Stomach (tissue), 19 donors: ENCODE measurements at regions of chr12 and their contacts with region 1.

Region 1: DNA sequence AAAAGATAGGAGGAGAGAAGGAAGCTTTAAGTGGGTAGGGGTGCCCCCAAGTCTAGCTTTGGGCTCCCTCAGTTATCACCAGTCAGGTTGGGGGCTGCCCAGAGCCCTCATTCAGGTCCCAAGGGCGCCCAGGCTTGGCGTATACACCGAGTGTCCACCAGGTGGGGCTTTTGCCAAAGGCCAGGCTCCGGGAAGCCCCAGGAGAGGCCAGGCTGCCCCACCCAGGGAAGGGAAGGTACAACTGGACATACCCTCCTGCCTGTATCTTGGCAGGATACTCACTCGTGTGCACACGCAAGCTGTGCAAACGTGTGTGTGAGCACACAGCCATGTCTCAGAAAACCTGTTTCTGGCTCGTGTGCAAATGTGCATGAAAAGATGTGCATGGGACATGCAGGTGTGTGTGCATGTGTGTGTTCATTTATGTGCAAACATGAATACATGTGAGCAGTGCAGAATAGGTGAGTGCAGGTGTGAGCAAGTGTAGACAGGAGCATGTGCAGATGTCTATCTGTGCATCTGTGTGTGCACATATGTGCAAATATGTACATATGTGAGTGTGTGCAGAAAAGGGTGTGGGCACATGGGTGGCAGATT is 103.9 kb upstream of the MYL2 start:
- DNase-seq: peak; percentile 64 to 65
- H3K4me3 ChIP-seq: no peak overlapping the region
- H3K27ac ChIP-seq: no peak overlapping the region
- H3K4me1 ChIP-seq: peaks cover 0 to 4% (median 0%) of the 10 kb centered on the region in 4 donors
- H3K27me3 ChIP-seq: peaks cover 0 to 90% (median 13%) of the 10 kb centered on the region in 3 donors
- CTCF ChIP-seq: peak in 5 of 7 experiments; percentile 57 to 79 (median 69)
- EP300 ChIP-seq: no peak
- POLR2A ChIP-seq: no peak

Region 2: DNA sequence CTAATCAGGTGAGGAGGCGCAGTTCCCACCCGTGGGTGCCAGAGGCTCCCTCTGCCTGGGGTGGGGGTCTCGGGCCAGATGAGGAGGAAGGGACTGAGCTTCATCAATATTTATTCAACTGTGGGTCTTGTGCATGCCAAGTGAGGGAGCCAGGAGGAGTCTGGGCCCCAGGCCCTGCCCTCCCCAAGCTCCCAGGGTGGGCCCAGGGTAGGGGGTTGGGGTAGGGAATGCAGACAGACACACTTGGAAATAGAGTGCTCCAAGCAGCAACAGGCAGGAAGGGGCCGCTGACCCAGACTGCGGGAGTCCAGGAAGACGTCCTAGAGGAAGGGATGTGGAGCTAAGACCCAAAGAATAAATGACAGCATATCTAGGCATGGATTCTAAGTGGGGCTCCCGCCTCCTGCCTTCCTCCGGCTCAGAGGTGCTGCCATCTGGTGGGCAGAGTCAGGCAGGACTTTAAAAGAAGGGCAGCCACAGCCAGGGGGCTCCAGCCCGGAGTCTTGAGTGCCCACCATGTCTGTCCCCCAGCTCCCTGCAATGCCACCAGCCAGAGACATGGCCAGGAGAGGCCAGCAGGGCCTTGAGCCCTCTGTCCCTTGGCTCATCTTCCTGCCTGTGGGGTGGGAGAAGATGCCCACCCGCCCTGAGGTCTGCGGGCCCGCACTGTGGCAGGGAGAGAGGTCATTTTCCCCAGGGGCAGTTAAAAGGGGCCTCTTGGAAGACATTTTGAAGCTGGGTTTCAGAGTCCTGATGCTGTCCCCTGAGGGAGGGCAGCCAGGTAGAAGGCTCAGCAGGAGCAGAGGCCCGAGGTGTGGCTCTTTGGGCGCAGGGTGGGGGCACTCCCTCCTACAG is 274.5 kb after region 1 on chr12:
- intact Hi-C with region 1: loop called (anchors 10 kb)
- DNase-seq: peak; percentile 34 to 80
- H3K4me3 ChIP-seq: no peak overlapping the region
- H3K27ac ChIP-seq: no peak overlapping the region
- H3K4me1 ChIP-seq: no peaks in the 10 kb centered on the region
- H3K27me3 ChIP-seq: peaks cover 0 to 19% (median 0%) of the 10 kb centered on the region in 3 donors
- CTCF ChIP-seq: peak in 5 of 7 experiments; percentile 42 to 68 (median 55)
- EP300 ChIP-seq: no peak
- POLR2A ChIP-seq: no peak